ENCODE measurements at regions of chr11 and their contacts with region 1.

Region 1: DNA sequence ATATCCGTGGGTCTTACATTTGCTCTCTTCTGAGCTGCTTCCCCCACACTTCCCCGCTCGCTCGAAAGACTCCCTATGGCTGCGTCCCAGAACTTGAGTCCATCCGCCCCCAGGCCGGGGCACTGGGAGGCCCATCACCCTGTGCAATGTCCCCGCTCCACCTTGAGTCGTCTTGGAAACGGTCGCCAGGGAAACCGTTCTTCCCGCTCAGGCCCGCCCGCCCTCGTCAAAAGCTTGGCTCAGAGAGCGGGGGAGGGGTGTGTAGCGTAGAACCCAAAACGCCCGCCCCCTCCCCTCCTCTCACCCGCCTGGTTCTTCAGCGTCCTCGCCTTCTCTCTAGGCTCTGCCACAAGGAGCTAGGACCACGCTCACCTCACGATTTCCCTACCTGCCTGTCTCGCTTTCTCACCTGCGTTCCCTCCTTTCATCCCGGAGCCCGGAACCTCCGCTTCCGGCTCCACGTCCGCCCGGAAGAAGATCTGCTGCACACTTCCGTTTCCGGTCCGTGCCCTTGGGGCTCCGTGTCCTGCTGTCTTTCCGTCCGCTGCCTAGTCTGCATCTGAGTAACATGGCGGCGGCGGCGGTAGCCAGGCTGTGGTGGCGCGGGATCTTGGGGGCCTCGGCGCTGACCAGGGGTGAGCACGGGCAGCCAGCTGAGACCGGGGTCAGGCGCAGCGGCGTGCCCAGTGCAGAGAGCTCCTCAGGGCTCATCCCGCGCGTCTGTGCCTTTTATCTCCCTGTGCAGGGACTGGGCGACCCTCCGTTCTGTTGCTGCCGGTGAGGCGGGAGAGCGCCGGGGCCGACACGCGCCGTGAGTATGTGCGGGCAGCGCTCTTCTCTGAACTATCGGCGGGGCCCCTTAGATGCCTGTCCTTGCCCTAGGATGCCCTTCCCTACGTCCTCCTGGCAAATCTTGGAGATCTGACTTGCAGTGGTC is at the starts of genes KBTBD4 and NDUFS3:
- DNase-seq: peak; percentile 90
- ATAC-seq: peak; percentile 93
- H3K4me3 Mint-ChIP-seq: peak within 1 kb of the TSS; percentile 99
- H3K27ac Mint-ChIP-seq: peak within 1 kb of the TSS; percentile 97
- H3K4me1 Mint-ChIP-seq: peaks cover 38% of the 10 kb centered on the region
- H3K27me3 Mint-ChIP-seq: no peaks in the 10 kb centered on the region
- CTCF ChIP-seq: no peak
- total RNA-seq, gene KBTBD4: 19.5 and 20.4 TPM in 2 replicates
- total RNA-seq, gene NDUFS3: 95.9 and 102 TPM in 2 replicates

Region 2: DNA sequence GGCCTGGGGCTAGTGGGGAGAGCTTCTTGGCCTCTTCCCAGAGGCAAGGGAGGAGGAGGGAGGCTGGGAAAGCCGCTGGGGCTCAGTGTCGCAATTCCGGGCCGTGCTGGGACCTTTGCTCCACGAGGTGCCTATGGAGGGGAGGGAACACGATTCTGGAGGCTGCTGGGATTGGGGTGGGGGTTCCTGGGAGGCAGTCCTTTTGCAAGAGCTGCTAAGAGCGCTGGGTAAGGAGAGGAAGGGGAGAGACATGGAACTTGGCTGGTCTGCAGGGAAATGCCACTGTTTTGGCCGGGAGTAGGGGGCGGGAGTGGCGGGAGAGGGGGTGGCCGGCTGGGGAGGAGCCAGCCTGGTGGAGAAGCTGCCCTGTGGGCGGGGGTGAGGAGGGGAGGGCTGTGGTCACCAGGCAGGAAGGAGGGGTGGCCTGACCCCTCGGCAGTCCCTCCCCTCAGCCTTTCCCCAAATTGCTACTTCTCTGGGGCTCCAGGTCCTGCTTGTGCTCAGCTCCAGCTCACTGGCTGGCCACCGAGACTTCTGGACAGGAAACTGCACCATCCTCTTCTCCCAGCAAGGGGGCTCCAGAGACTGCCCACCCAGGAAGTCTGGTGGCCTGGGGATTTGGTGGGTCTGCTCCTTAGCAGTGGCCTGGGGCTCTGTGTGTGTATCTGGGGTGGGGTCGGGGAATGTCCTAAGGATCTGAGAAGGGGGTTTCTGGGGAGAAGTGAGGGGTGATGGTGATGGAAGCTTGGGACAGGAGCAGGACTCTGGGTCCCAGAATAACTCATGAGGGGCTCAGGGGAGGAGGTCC is 321.1 kb before region 1 on chr11 and contains the start of gene NR1H3:
- CTCF ChIA-PET with region 1: no interaction called
- POLR2A ChIA-PET with region 1: no interaction called
- intact Hi-C with region 1: no loop called
- DNase-seq: no peak
- ATAC-seq: peak; percentile 31
- H3K4me3 Mint-ChIP-seq: no peak within 1 kb of the TSS
- H3K27ac Mint-ChIP-seq: no peak within 1 kb of the TSS
- H3K4me1 Mint-ChIP-seq: peaks cover 2% of the 10 kb centered on the region
- H3K27me3 Mint-ChIP-seq: no peaks in the 10 kb centered on the region
- CTCF ChIP-seq: no peak
- total RNA-seq, gene NR1H3: 3.9 and 4.9 TPM in 2 replicates

Region 3: DNA sequence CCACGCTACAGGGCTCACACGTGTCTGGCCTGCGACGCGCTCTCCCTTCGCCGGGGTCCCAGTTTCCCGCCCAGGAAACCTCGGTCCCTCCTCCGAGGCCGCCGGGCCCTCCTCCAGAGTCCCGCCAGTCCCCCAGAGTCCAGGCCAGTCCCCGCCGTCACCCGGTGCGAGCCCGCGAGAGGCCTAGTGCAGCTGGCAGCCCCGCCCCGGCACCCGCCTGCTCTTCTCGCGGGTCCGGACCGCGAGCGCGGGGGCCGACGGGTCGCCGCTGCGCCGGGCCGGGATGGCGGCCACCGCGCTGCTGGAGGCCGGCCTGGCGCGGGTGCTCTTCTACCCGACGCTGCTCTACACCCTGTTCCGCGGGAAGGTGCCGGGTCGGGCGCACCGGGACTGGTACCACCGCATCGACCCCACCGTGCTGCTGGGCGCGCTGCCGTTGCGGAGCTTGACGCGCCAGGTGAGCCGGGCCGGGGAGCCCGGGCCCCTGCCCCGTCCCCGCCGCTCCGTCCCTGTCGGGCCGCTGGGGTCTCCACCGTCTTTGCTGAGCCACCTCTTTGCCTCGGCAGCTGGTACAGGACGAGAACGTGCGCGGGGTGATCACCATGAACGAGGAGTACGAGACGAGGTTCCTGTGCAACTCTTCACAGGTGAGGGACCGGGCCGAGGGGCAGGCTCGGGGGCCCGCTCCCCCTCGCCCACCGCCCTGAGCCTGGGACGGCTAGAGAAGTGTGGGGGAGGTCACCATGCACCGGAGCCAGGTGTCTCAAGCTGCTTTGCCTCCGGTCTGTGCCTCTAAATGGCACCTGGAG is 13.2 kb before region 1 on chr11 and contains the start of gene PTPMT1:
- CTCF ChIA-PET with region 1: no interaction called
- POLR2A ChIA-PET with region 1: interaction called, 56 read pairs
- intact Hi-C with region 1: loop called (anchors 1 kb)
- DNase-seq: peak; percentile 66
- ATAC-seq: peak; percentile 95
- H3K4me3 Mint-ChIP-seq: peak within 1 kb of the TSS; percentile 84
- H3K27ac Mint-ChIP-seq: peak within 1 kb of the TSS; percentile 54
- H3K4me1 Mint-ChIP-seq: peaks cover 18% of the 10 kb centered on the region
- H3K27me3 Mint-ChIP-seq: no peaks in the 10 kb centered on the region
- CTCF ChIP-seq: no peak
- total RNA-seq, gene PTPMT1: 27.1 and 32.8 TPM in 2 replicates

Region 4: GRCh38 chr11:47691979-47692378 is 113.2 kb after region 1 on chr11:
- CTCF ChIA-PET with region 1: no interaction called
- POLR2A ChIA-PET with region 1: interaction called, 12 read pairs
- intact Hi-C with region 1: no loop called
- DNase-seq: no peak
- ATAC-seq: no peak
- H3K4me3 Mint-ChIP-seq: no peak overlapping the region
- H3K27ac Mint-ChIP-seq: no peak overlapping the region
- H3K4me1 Mint-ChIP-seq: no peaks in the 10 kb centered on the region
- H3K27me3 Mint-ChIP-seq: no peaks in the 10 kb centered on the region
- CTCF ChIP-seq: no peak

Region 5: GRCh38 chr11:47766305-47767227 is 187.8 kb after region 1 on chr11:
- CTCF ChIA-PET with region 1: no interaction called
- POLR2A ChIA-PET with region 1: no interaction called
- intact Hi-C with region 1: loop called (anchors 2 kb)
- DNase-seq: peak; percentile 63
- ATAC-seq: peak; percentile 20
- H3K4me3 Mint-ChIP-seq: peak overlapping the region; percentile 97
- H3K27ac Mint-ChIP-seq: peak overlapping the region; percentile 100
- H3K4me1 Mint-ChIP-seq: peaks cover 33% of the 10 kb centered on the region
- H3K27me3 Mint-ChIP-seq: no peaks in the 10 kb centered on the region
- CTCF ChIP-seq: no peak

Region 6: DNA sequence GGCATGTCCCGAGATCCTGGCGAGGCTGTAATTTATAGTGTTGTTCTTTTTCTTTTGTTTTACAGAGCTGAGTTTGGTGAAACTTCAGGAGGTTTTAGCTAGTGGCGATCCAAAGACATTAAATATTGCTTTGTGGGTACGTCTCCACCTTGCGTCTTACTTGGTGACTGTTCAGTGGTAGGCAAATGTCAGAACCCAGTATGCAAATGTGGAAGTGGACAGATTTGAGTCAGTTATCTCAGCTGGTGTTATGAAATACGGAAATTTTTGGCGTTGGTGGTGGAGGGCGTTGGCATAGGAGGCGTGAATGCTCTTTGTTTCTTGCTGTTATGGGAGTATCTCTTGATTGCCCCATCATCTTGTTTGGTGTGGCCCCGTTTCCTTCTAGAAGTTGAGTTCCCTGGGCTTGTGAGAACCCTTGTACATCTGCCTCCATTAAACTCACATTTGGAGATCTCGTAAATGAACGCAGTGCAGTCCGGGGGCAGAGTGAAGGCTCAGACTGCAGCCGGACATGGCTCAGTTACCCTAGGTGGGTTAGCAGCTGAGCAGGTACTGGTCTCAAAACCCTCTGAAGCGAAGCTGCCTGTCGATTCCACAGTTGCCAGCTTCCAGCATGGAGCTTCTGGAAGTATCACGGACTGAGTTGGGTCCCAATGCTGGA is 441.4 kb after region 1 on chr11:
- CTCF ChIA-PET with region 1: no interaction called
- POLR2A ChIA-PET with region 1: interaction called, 10 read pairs
- intact Hi-C with region 1: no loop called
- DNase-seq: no peak
- ATAC-seq: peak; percentile 80
- H3K4me3 Mint-ChIP-seq: peak overlapping the region; percentile 40
- H3K27ac Mint-ChIP-seq: peak overlapping the region; percentile 88
- H3K4me1 Mint-ChIP-seq: peaks cover 79% of the 10 kb centered on the region
- H3K27me3 Mint-ChIP-seq: no peaks in the 10 kb centered on the region
- CTCF ChIP-seq: no peak

Measured in activated B cell treated with CpG ODN at 0.5 μM for 24 hours (primary cell).